A673 (cell line): ENCODE measurements at regions of chr10 and their contacts with region 1.

Region 1: GRCh38 chr10:52043811-52044210 is 270.3 kb upstream of the DKK1 start:
- DNase-seq: no peak
- H3K4me3 ChIP-seq: no peak overlapping the region
- H3K27ac ChIP-seq: no peak overlapping the region
- H3K4me1 ChIP-seq: no peaks in the 10 kb centered on the region
- H3K27me3 ChIP-seq: no peaks in the 10 kb centered on the region
- CTCF ChIP-seq: no peak

Region 2: GRCh38 chr10:52082307-52082706 is 38.5 kb after region 1 on chr10:
- CTCF ChIA-PET with region 1: no interaction called
- POLR2A ChIA-PET with region 1: no interaction called
- intact Hi-C with region 1: loop called (anchors 2 kb)
- DNase-seq: no peak
- H3K4me3 ChIP-seq: no peak overlapping the region
- H3K27ac ChIP-seq: no peak overlapping the region
- H3K4me1 ChIP-seq: no peaks in the 10 kb centered on the region
- H3K27me3 ChIP-seq: peaks cover 21% of the 10 kb centered on the region
- CTCF ChIP-seq: no peak